Dendritic cell treated with granulocyte-macrophage colony-stimulating factor and Interleukin-4, amounts not matched to agents 40 ng/mL and 50 ng/mL, for 4 days (primary cell): ENCODE measurements at regions of chr12 and their contacts with region 1.

Region 1: DNA sequence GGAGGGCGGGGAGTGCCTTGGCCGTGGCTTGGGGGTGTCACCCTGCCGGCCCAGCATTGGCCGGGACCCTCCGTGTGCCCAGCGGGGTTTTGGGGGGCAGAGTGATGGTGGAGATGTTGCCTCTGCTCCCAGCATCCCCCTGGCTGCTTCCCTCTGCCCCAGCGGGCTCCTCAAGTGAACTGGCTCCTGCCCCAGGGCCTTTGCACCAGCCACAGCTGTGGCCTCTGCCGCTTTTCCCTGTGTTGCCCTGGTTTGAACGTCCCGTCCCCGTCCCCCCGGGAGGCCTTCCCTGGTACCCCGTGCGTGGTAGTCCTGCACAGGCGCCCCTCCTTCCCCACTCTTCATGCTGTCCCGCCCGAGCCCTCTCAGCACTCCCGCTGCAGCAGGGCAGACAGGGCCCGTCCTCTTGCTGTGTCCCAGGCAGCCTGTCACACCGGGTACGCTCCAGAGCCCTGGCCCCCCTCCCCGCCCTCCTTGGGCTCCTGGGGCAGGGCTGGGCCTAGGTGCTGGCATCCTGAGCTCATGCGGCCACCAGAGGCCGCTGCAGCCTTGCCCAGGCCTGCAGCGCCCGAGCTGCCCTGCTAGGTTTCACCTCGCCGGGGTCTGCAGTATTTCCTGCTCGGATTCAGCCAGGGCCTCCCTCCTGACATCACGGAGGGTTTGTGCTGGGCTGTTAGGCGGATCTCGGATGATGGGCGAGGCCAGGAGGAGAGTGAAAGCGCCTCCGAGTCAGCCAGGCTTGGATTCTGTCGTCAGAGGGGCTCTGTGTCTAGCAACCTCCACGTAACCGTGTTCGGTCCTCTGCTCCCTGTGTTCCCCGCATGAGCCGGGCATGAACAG is 9.5 kb downstream of the NOC4L start:
- H3K4me3 Mint-ChIP-seq: no peak overlapping the region
- H3K27ac Mint-ChIP-seq: no peak overlapping the region
- H3K4me1 Mint-ChIP-seq: no peaks in the 10 kb centered on the region
- H3K27me3 Mint-ChIP-seq: no peaks in the 10 kb centered on the region

Region 2: DNA sequence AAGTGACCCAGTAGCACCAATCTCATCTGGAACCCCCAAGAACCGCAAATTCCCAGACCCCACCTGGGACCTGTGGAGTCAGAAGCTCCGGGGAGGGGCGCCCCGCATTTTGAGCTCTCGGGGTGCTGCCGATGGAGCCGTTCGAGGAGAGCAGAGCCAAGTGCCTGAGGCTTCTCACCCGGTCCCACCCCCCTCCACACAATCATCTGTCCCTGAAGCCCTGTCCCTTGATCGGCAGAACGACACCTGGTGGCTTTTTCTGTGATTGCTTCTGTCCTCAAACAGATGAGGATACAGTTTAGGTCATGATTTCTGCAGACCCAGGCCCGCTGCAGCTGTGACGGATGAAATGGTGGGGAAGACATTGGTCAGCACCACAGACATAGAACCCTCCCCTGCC is 65.2 kb after region 1 on chr12:
- intact Hi-C with region 1: loop called (anchors 1 kb)
- H3K4me3 Mint-ChIP-seq: no peak overlapping the region
- H3K27ac Mint-ChIP-seq: no peak overlapping the region
- H3K4me1 Mint-ChIP-seq: peaks cover 6% of the 10 kb centered on the region
- H3K27me3 Mint-ChIP-seq: peaks cover 11% of the 10 kb centered on the region

Region 3: DNA sequence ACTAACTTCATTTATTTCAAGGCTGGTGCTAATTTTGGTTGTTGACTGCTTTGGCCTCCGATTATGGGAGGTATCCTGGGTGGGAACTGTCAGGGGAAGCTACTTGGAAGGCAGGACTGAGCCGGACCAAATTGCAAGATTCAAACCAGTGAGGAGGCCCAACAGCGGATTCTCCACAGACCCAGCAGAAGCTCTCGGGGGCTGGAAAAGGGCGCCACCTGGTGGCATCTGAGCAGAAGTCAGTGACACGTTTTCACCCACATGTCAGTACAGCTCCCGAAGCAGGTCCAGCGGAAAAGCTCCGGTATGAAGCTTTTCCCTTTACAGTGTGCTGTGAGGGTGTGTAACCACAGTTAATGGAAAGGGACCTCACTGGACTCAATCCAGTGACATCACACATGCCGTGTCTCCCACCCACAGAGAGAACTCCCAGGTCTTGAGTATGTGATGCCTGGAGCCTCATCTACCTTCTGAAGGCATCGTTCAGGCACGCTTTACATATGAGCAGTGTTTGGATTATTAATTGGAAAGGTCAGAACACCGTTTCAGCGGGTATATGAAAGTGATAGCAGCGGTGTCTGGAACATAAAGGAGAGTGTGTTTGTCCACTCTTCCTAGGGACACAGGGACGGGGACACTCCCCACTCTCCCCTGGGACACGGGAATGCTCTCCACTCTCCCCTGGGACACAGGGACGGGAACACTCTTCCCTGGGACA is 461.3 kb after region 1 on chr12:
- intact Hi-C with region 1: loop called (anchors 5 kb)
- H3K4me3 Mint-ChIP-seq: no peak overlapping the region
- H3K27ac Mint-ChIP-seq: no peak overlapping the region
- H3K4me1 Mint-ChIP-seq: peaks cover 14% of the 10 kb centered on the region
- H3K27me3 Mint-ChIP-seq: peaks cover 82% of the 10 kb centered on the region